Naive thymus-derived CD4-positive, alpha-beta T cell (primary cell): ENCODE measurements at regions of chr12 and their contacts with region 1.

Region 1: GRCh38 chr12:25295361-25295760 is 44.6 kb upstream of the KRAS start:
- DNase-seq: peak in 1 of 9 donors; percentile 17
- ATAC-seq: no peak
- H3K4me3 ChIP-seq: no peak overlapping the region
- H3K4me3 Mint-ChIP-seq: no peak overlapping the region
- H3K27ac ChIP-seq: no peak overlapping the region
- H3K27ac Mint-ChIP-seq: peak overlapping the region in 1 of 9 donors; percentile 54
- H3K4me1 ChIP-seq: no peaks in the 10 kb centered on the region
- H3K4me1 Mint-ChIP-seq: peaks cover 0 to 15% (median 11%) of the 10 kb centered on the region in 7 donors
- H3K27me3 ChIP-seq: no peaks in the 10 kb centered on the region
- H3K27me3 Mint-ChIP-seq: peaks cover 0 to 2% (median 0%) of the 10 kb centered on the region in 5 donors

Region 2: DNA sequence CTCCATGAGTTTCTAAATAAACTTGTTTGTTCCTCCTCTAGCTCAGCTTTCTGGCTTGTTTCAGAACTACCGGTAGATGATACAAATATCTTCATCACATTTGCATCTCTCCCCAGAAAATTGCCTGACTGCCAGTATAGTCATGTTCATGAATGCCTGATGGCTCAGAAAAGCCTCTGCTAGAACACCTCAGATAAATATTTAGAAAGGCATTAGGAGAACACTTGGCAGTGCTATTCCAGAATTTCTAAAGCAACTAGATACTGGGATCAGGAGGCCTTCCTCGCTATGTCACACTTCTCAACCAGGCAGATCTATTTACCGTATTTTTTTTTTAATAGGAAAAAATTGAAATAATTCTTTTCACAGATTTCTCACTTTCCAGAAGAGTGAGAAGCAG is 12.4 kb before region 1 on chr12:
- CTCF ChIA-PET with region 1: no interaction called
- POLR2A ChIA-PET with region 1: interaction called, 8 read pairs
- intact Hi-C with region 1: loop called in 1 of 2 experiments (anchors 2 kb)
- DNase-seq: no peak
- ATAC-seq: no peak
- H3K4me3 ChIP-seq: no peak overlapping the region
- H3K4me3 Mint-ChIP-seq: peak overlapping the region in 7 of 10 donors; percentile 19 to 70 (median 53)
- H3K27ac ChIP-seq: peak overlapping the region; percentile 41
- H3K27ac Mint-ChIP-seq: peak overlapping the region in 7 of 9 donors; percentile 73 to 92 (median 81)
- H3K4me1 ChIP-seq: peaks cover 22 to 48% of the 10 kb centered on the region in 2 donors
- H3K4me1 Mint-ChIP-seq: peaks cover 12 to 66% (median 57%) of the 10 kb centered on the region in 7 donors
- H3K27me3 ChIP-seq: no peaks in the 10 kb centered on the region
- H3K27me3 Mint-ChIP-seq: peaks cover 0 to 3% (median 0%) of the 10 kb centered on the region in 5 donors

Region 3: GRCh38 chr12:25308756-25309155 is 13.4 kb after region 1 on chr12:
- CTCF ChIA-PET with region 1: no interaction called
- POLR2A ChIA-PET with region 1: no interaction called
- intact Hi-C with region 1: no loop called
- DNase-seq: no peak
- ATAC-seq: no peak
- H3K4me3 ChIP-seq: no peak overlapping the region
- H3K4me3 Mint-ChIP-seq: no peak overlapping the region
- H3K27ac ChIP-seq: no peak overlapping the region
- H3K27ac Mint-ChIP-seq: no peak overlapping the region
- H3K4me1 ChIP-seq: no peaks in the 10 kb centered on the region
- H3K4me1 Mint-ChIP-seq: peaks cover 0 to 4% (median 0%) of the 10 kb centered on the region in 7 donors
- H3K27me3 ChIP-seq: no peaks in the 10 kb centered on the region
- H3K27me3 Mint-ChIP-seq: peaks cover 0 to 33% (median 0%) of the 10 kb centered on the region in 5 donors